T-cell (primary cell): ENCODE measurements at regions of chr10 and their contacts with region 1.

Region 1: GRCh38 chr10:72709041-72709440 is 17.1 kb downstream of the MCU start:
- DNase-seq: no peak
- ATAC-seq: no peak
- H3K4me3 ChIP-seq: no peak overlapping the region
- H3K4me3 Mint-ChIP-seq: no peak overlapping the region
- H3K27ac ChIP-seq: no peak overlapping the region
- H3K27ac Mint-ChIP-seq: no peak overlapping the region
- H3K4me1 ChIP-seq: no peaks in the 10 kb centered on the region
- H3K4me1 Mint-ChIP-seq: peaks cover 0 to 5% (median 2%) of the 10 kb centered on the region in 3 donors
- H3K27me3 ChIP-seq: no peaks in the 10 kb centered on the region
- H3K27me3 Mint-ChIP-seq: no peaks in the 10 kb centered on the region

Region 2: GRCh38 chr10:72808001-72808400 is 99.0 kb after region 1 on chr10:
- CTCF ChIA-PET with region 1: no interaction called
- POLR2A ChIA-PET with region 1: interaction called in 1 of 2 experiments, 12 read pairs
- DNase-seq: no peak
- ATAC-seq: no peak
- H3K4me3 ChIP-seq: no peak overlapping the region
- H3K4me3 Mint-ChIP-seq: no peak overlapping the region
- H3K27ac ChIP-seq: no peak overlapping the region
- H3K27ac Mint-ChIP-seq: no peak overlapping the region
- H3K4me1 ChIP-seq: no peaks in the 10 kb centered on the region
- H3K4me1 Mint-ChIP-seq: peaks cover 0 to 4% (median 0%) of the 10 kb centered on the region in 3 donors
- H3K27me3 ChIP-seq: no peaks in the 10 kb centered on the region
- H3K27me3 Mint-ChIP-seq: no peaks in the 10 kb centered on the region